Ovary (tissue), 10 donors: ENCODE measurements at regions of chr12 and their contacts with region 1.

Region 1: GRCh38 chr12:97575403-97576193 is 113.0 kb downstream of the RMST start:
- DNase-seq: no peak
- H3K4me3 ChIP-seq: no peak overlapping the region
- H3K27ac ChIP-seq: no peak overlapping the region
- H3K4me1 ChIP-seq: no peaks in the 10 kb centered on the region
- H3K27me3 ChIP-seq: no peaks in the 10 kb centered on the region
- CTCF ChIP-seq: no peak
- EP300 ChIP-seq: no peak
- POLR2A ChIP-seq: no peak

Region 2: GRCh38 chr12:97666263-97666662 is 90.7 kb after region 1 on chr12:
- intact Hi-C with region 1: loop called in 1 of 4 experiments (anchors 10 kb)
- DNase-seq: no peak
- H3K4me3 ChIP-seq: no peak overlapping the region
- H3K27ac ChIP-seq: no peak overlapping the region
- H3K4me1 ChIP-seq: no peaks in the 10 kb centered on the region
- H3K27me3 ChIP-seq: no peaks in the 10 kb centered on the region
- CTCF ChIP-seq: no peak
- EP300 ChIP-seq: no peak
- POLR2A ChIP-seq: no peak